Left cardiac atrium (tissue), 4 donors: ENCODE measurements at regions of chr6 and their contacts with region 1.

Region 1: GRCh38 chr6:30130887-30131862 is 4.8 kb upstream of the TRIM40 start:
- DNase-seq: peak; percentile 60
- ATAC-seq: peak; percentile 80 to 89

Region 2: DNA sequence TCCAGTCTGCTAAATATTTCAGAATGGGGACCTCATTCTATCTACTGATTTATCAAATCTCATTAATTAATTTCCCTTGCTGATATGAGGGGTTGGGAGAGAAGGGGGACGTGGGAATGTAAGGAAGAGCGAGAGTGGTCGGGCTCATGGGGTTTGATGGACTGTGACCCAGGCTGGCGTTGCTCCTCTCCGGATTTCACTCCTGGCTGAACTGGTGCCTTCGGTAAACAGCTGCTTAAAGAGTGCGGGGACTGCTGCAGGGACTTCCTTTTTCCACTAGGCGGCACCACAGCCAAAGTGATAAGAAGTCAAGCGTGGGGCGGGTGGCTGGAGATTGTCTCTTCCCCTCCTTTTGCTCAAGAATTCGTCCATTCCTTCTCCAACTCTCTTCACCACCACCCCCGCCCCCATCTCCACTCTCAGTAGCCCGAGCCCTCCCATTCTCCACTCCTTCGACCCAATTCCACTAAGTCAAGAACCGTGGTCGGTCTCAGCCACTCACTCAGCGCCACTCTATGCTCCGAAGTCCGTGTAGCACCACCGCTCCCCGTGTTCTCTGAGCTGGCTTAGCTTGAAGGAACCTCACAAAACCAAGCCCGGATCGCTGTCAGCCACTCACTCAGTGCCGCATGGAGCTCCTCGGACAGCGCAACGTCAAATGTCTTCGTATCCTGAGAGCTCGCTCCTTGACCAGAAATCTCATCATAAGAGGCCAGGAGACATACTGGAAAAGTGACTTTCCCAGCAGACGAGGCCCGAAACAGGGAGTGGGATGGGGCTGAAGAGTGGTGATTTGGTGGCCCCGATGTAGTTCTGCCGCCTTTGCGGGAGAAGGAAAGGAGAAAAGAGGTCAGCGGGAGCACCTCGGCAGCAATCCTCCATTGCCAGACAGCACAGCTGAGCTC is 28.0 kb before region 1 on chr6:
- intact Hi-C with region 1: loop called in 1 of 2 experiments (anchors 1 kb)
- DNase-seq: peak; percentile 85
- ATAC-seq: peak; percentile 81 to 83